ENCODE measurements at regions of chr6 and their contacts with region 1.

Region 1: GRCh38 chr6:122620879-122621278 is 10.7 kb downstream of the PKIB start:
- DNase-seq: no peak
- ATAC-seq: no peak
- H3K4me3 ChIP-seq: no peak overlapping the region
- H3K27ac ChIP-seq: no peak overlapping the region
- H3K4me1 ChIP-seq: no peaks in the 10 kb centered on the region
- H3K27me3 ChIP-seq: no peaks in the 10 kb centered on the region
- CTCF ChIP-seq: no peak
- EP300 ChIP-seq: no peak
- POLR2A ChIP-seq: no peak
- RAD21 ChIP-seq: no peak

Region 2: DNA sequence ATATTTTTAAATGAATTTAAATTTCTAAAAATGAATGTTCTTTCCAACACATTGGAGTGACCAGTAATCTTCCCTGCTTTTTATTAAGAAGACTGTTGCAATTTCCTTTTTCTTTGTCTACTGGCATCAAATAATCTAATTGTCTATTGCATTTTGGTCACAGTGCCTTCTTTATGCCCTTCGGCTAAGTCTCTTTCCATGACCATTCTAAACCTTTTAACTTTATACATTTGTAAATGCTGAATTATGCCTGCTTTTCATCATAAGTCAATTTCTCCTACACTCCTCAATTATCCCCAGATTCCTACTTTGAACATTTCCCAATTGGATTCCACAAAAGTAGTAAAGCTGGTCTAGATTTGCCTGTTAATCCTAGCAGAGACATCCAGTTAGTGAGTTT is 290.6 kb before region 1 on chr6:
- CTCF ChIA-PET with region 1: no interaction called
- POLR2A ChIA-PET with region 1: no interaction called
- RAD21 ChIA-PET with region 1: no interaction called
- SMC1A ChIA-PET with region 1: no interaction called
- in situ Hi-C with region 1: no loop called
- intact Hi-C with region 1: no loop called
- DNase-seq: no peak
- ATAC-seq: no peak
- H3K4me3 ChIP-seq: no peak overlapping the region
- H3K27ac ChIP-seq: no peak overlapping the region
- H3K4me1 ChIP-seq: no peaks in the 10 kb centered on the region
- H3K27me3 ChIP-seq: no peaks in the 10 kb centered on the region
- CTCF ChIP-seq: no peak
- EP300 ChIP-seq: no peak
- POLR2A ChIP-seq: no peak
- RAD21 ChIP-seq: no peak

Region 3: GRCh38 chr6:122609856-122610689 is 10.8 kb before region 1 on chr6 and contains the start of gene PKIB:
- CTCF ChIA-PET with region 1: interaction called, 4 read pairs
- POLR2A ChIA-PET with region 1: no interaction called
- RAD21 ChIA-PET with region 1: interaction called, 7 read pairs
- SMC1A ChIA-PET with region 1: interaction called, 17 read pairs
- in situ Hi-C with region 1: no loop called
- intact Hi-C with region 1: no loop called
- DNase-seq: no peak
- ATAC-seq: peak; percentile 98
- H3K4me3 ChIP-seq: peak within 1 kb of the TSS; percentile 50
- H3K27ac ChIP-seq: no peak within 1 kb of the TSS
- H3K4me1 ChIP-seq: peaks cover 5% of the 10 kb centered on the region
- H3K27me3 ChIP-seq: peaks cover 8 to 17% of the 10 kb centered on the region in 2 experiments
- CTCF ChIP-seq: peak in 2 of 3 experiments; percentile 19 to 24; a peak in 2 of 6 replicates
- EP300 ChIP-seq: no peak
- POLR2A ChIP-seq: no peak
- RAD21 ChIP-seq: no peak
- polyA plus RNA-seq, gene PKIB: 0.97 to 1.8 TPM

Region 4: GRCh38 chr6:122740936-122741335 is 120.1 kb after region 1 on chr6:
- CTCF ChIA-PET with region 1: no interaction called
- POLR2A ChIA-PET with region 1: no interaction called
- RAD21 ChIA-PET with region 1: no interaction called
- SMC1A ChIA-PET with region 1: no interaction called
- in situ Hi-C with region 1: no loop called
- intact Hi-C with region 1: no loop called
- DNase-seq: no peak
- ATAC-seq: no peak
- H3K4me3 ChIP-seq: no peak overlapping the region
- H3K27ac ChIP-seq: no peak overlapping the region
- H3K4me1 ChIP-seq: no peaks in the 10 kb centered on the region
- H3K27me3 ChIP-seq: no peaks in the 10 kb centered on the region
- CTCF ChIP-seq: no peak
- EP300 ChIP-seq: no peak
- POLR2A ChIP-seq: no peak
- RAD21 ChIP-seq: no peak